A673 (cell line): ENCODE measurements at regions of chr22 and their contacts with region 1.

Region 1: DNA sequence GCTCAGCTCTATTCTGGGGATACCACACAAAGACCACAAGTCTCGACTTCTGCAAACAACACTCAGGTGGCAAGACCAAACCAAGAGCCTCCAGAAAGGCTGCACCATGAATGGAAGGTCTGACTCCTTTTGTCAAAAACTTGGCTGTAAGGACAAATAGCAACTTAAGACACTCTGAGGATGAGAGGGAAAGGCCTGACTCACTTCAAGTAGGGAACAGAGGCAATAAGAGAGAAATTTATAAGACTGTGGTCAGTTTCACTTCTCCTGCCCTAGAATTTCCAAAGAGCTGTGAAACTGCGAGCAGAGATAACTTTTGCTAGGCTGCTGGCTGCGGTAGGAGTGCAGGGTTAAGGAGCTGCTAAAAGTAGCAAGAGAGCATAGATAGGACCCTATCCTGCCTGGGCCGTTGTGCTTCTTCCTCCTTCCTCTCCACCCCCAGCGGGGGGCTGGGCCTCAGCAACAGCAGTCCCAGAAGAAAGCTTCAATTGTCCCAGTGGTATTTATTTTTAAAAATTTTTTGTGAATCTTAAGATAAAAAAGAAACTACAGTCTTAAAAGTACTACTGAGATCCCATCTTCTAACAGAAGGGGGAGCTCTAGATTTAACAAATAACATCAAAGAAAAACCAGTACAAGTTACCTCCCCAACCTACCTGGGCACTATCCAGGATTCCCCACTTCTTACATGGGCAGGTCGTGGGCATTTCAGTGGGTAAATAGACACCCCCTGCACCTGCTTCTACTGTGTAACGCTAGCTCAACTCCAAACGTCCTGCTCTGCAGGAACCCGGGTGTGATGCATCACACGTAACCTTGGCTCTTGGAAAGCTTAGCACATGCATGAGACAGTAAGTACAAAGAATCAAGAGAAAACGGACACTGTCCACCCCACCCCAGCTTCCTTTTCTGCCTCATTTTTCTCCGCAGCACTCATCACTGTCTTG is 66.4 kb downstream of the SGSM3 start:
- DNase-seq: peak; percentile 50
- H3K4me3 ChIP-seq: no peak overlapping the region
- H3K27ac ChIP-seq: no peak overlapping the region
- H3K4me1 ChIP-seq: peaks cover 6% of the 10 kb centered on the region
- H3K27me3 ChIP-seq: no peaks in the 10 kb centered on the region
- CTCF ChIP-seq: peak; percentile 80

Region 2: GRCh38 chr22:40487663-40488249 is 51.0 kb after region 1 on chr22:
- CTCF ChIA-PET with region 1: interaction called, 5 read pairs
- POLR2A ChIA-PET with region 1: no interaction called
- intact Hi-C with region 1: loop called (anchors 5 kb)
- DNase-seq: peak; percentile 62
- H3K4me3 ChIP-seq: no peak overlapping the region
- H3K27ac ChIP-seq: peak overlapping the region; percentile 85
- H3K4me1 ChIP-seq: peaks cover 43% of the 10 kb centered on the region
- H3K27me3 ChIP-seq: no peaks in the 10 kb centered on the region
- CTCF ChIP-seq: peak; percentile 94

Region 3: DNA sequence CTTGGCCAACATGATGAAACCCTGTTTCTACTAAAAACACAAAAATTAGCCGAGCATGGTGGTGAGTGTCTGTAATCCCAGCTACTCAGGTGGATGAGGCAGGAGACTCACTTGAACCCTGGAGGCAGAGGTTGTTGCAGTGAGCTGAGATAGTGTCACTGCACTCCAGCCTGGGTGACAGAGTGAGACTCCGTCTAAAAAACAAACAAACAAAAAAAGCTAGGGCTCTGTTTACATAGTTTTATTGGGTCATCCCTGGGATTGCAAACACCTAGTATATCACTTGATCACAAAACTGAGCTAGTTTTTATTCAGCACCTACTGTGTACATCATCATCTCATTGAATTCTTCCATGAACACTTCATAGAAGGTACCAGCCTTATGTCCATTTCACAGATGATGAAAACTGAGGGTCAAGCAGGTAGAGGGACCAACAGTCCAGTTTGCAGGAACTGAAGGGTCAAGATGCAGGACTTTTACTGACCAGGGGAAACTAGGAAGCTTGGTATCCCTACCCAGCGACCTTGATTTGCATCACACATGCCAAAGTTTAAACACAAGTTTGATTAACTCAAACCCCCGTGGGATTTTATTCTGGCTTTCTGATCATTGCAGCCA is 208.9 kb after region 1 on chr22:
- CTCF ChIA-PET with region 1: interaction called, 9 read pairs
- POLR2A ChIA-PET with region 1: no interaction called
- intact Hi-C with region 1: loop called (anchors 1 kb)
- DNase-seq: no peak
- H3K4me3 ChIP-seq: no peak overlapping the region
- H3K27ac ChIP-seq: no peak overlapping the region
- H3K4me1 ChIP-seq: no peaks in the 10 kb centered on the region
- H3K27me3 ChIP-seq: no peaks in the 10 kb centered on the region
- CTCF ChIP-seq: no peak

Region 4: GRCh38 chr22:40898850-40899357 is 462.1 kb after region 1 on chr22:
- CTCF ChIA-PET with region 1: interaction called, 6 read pairs
- POLR2A ChIA-PET with region 1: no interaction called
- intact Hi-C with region 1: loop called (anchors 5 kb)
- DNase-seq: peak; percentile 84
- H3K4me3 ChIP-seq: no peak overlapping the region
- H3K27ac ChIP-seq: no peak overlapping the region
- H3K4me1 ChIP-seq: peaks cover 5% of the 10 kb centered on the region
- H3K27me3 ChIP-seq: no peaks in the 10 kb centered on the region
- CTCF ChIP-seq: peak; percentile 72